B cell (primary cell): ENCODE measurements at regions of chr6 and their contacts with region 1.

Region 1: GRCh38 chr6:137944793-137945498 is 77.9 kb downstream of the TNFAIP3 start:
- DNase-seq: peak; percentile 66
- ATAC-seq: peak; percentile 72
- H3K4me3 ChIP-seq: no peak overlapping the region
- H3K4me3 Mint-ChIP-seq: no peak overlapping the region
- H3K27ac ChIP-seq: no peak overlapping the region
- H3K27ac Mint-ChIP-seq: no peak overlapping the region
- H3K4me1 ChIP-seq: peaks cover 15 to 19% of the 10 kb centered on the region in 2 donors
- H3K4me1 Mint-ChIP-seq: peaks cover 22% of the 10 kb centered on the region
- H3K27me3 ChIP-seq: no peaks in the 10 kb centered on the region
- H3K27me3 Mint-ChIP-seq: no peaks in the 10 kb centered on the region
- CTCF ChIP-seq: peak; percentile 87

Region 2: GRCh38 chr6:137799950-137800568 is 144.9 kb before region 1 on chr6:
- CTCF ChIA-PET with region 1: interaction called, 49 read pairs
- POLR2A ChIA-PET with region 1: no interaction called
- intact Hi-C with region 1: loop called (anchors 1 kb)
- DNase-seq: peak; percentile 83
- ATAC-seq: peak; percentile 80
- H3K4me3 ChIP-seq: no peak overlapping the region
- H3K4me3 Mint-ChIP-seq: no peak overlapping the region
- H3K27ac ChIP-seq: no peak overlapping the region
- H3K27ac Mint-ChIP-seq: peak overlapping the region; percentile 16
- H3K4me1 ChIP-seq: peaks cover 9% of the 10 kb centered on the region in 2 donors
- H3K4me1 Mint-ChIP-seq: peaks cover 21% of the 10 kb centered on the region
- H3K27me3 ChIP-seq: no peaks in the 10 kb centered on the region
- H3K27me3 Mint-ChIP-seq: no peaks in the 10 kb centered on the region
- CTCF ChIP-seq: peak; percentile 68

Region 3: DNA sequence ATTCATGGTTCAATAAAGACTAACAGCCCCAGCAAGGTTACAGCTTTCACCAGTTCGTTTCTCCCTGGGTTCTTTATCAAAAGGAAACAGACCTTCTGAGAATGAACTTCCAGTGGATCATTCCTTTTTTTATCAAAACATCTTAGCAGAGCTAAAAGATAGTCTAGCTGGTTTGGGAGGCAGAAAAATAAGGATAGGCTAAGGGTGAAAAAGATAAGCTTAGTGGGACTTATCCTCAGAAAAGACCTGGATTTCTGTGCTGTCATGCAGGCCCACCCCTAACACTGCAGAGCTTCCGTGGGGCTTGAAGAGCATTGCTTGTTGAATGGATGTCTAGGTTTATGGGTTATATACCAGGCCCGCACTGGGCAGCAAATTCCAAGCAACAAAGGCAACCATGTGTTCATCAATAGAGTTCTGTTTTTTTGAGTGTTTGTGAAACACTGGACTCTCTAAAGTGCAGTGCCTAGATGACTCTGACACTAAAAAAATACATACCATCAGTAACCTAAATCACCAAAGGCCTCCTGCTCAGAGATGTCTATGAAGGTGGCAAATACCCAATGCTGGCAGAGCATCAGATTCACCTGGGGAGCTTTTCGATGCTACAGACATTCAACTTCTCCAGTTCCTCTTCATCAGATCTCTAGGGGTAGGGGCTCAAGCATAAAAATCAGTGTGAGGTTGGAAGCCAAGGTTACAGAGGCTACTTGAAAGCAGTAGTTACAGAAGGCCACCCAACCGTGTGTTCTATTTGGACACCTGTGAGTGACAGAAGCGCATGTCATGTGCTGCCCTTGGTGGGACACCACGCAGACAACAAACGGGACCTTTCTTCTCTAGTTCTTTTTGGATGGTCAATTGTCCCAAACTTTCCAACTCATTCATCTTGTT is 24.9 kb before region 1 on chr6:
- CTCF ChIA-PET with region 1: interaction called, 10 read pairs
- POLR2A ChIA-PET with region 1: no interaction called
- intact Hi-C with region 1: no loop called
- DNase-seq: peak; percentile 68
- ATAC-seq: peak; percentile 78
- H3K4me3 ChIP-seq: no peak overlapping the region
- H3K4me3 Mint-ChIP-seq: peak overlapping the region; percentile 23
- H3K27ac ChIP-seq: peak overlapping the region in 1 of 2 donors; percentile 45
- H3K27ac Mint-ChIP-seq: peak overlapping the region; percentile 44
- H3K4me1 ChIP-seq: peaks cover 25 to 28% of the 10 kb centered on the region in 2 donors
- H3K4me1 Mint-ChIP-seq: peaks cover 27% of the 10 kb centered on the region
- H3K27me3 ChIP-seq: no peaks in the 10 kb centered on the region
- H3K27me3 Mint-ChIP-seq: no peaks in the 10 kb centered on the region
- CTCF ChIP-seq: no peak

Region 4: GRCh38 chr6:137933696-137934095 is 11.2 kb before region 1 on chr6:
- CTCF ChIA-PET with region 1: interaction called, 29 read pairs
- POLR2A ChIA-PET with region 1: no interaction called
- intact Hi-C with region 1: loop called (anchors 1 kb)
- DNase-seq: no peak
- ATAC-seq: no peak
- H3K4me3 ChIP-seq: no peak overlapping the region
- H3K4me3 Mint-ChIP-seq: no peak overlapping the region
- H3K27ac ChIP-seq: no peak overlapping the region
- H3K27ac Mint-ChIP-seq: no peak overlapping the region
- H3K4me1 ChIP-seq: peaks cover 4 to 6% of the 10 kb centered on the region in 2 donors
- H3K4me1 Mint-ChIP-seq: peaks cover 8% of the 10 kb centered on the region
- H3K27me3 ChIP-seq: no peaks in the 10 kb centered on the region
- H3K27me3 Mint-ChIP-seq: no peaks in the 10 kb centered on the region
- CTCF ChIP-seq: no peak

Region 5: DNA sequence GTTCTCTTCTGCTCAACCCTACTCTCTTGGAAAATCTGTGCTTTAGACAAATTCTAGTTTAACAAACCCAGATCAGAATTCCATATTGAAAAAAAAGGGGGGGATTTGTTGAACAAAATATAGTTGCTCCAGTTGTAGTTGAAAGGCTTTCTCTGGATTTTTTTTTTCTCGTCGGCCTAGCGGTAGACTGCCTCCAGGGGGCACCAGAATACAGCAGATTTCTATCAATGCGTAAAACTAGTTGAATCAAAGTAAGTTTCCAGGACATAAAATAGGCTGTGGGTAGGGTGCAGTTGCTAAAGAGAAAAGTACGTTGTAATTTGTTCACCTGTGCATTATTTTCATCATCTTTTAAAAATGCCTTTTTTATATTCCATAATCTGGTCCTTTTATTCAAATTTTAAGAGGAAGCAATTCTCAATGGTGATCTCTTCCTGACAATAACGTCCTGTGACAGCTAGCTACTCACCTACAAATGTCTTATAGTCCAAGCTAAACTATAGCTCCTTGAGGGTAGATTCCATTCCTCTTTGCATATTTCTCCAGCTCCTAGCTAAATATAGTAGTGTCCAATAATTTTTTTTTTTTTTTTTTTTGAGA is 56.9 kb after region 1 on chr6:
- CTCF ChIA-PET with region 1: interaction called, 36 read pairs
- POLR2A ChIA-PET with region 1: no interaction called
- intact Hi-C with region 1: loop called (anchors 2 kb)
- DNase-seq: peak; percentile 65
- ATAC-seq: peak; percentile 63
- H3K4me3 ChIP-seq: no peak overlapping the region
- H3K4me3 Mint-ChIP-seq: no peak overlapping the region
- H3K27ac ChIP-seq: no peak overlapping the region
- H3K27ac Mint-ChIP-seq: no peak overlapping the region
- H3K4me1 ChIP-seq: no peaks in the 10 kb centered on the region
- H3K4me1 Mint-ChIP-seq: peaks cover 3% of the 10 kb centered on the region
- H3K27me3 ChIP-seq: no peaks in the 10 kb centered on the region
- H3K27me3 Mint-ChIP-seq: peaks cover 11% of the 10 kb centered on the region
- CTCF ChIP-seq: peak; percentile 96